GM23248 (cell line): ENCODE measurements at regions of chr2 and their contacts with region 1.

Region 1: GRCh38 chr2:168136392-168136977 is 110.9 kb downstream of the STK39 start:
- DNase-seq: peak; percentile 54
- H3K4me3 ChIP-seq: no peak overlapping the region
- H3K27ac ChIP-seq: no peak overlapping the region
- H3K4me1 ChIP-seq: no peaks in the 10 kb centered on the region
- H3K27me3 ChIP-seq: no peaks in the 10 kb centered on the region

Region 2: GRCh38 chr2:168336864-168337263 is 200.4 kb after region 1 on chr2:
- in situ Hi-C with region 1: loop called (anchors 10 kb)
- DNase-seq: no peak
- H3K4me3 ChIP-seq: no peak overlapping the region
- H3K27ac ChIP-seq: no peak overlapping the region
- H3K4me1 ChIP-seq: no peaks in the 10 kb centered on the region
- H3K27me3 ChIP-seq: no peaks in the 10 kb centered on the region

Region 3: DNA sequence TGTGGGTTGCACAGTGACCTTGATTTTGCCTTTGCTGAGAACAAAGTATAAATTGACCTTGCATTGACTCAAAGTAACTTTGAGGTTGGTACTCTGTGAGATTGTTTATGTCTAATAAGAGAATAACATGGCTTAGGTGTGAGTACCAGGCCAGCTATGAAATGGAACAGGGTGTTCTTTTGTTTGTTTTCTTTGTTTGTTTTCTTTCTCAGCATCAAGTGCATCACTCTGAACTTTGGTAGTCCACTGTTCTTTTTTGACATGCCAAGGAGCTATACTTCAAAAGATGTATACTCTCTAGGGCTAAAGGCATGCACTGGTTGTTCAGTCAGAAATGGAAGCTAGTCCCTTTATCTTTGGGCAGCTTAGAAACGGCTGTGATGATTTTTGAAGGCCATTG is 889.6 kb after region 1 on chr2:
- in situ Hi-C with region 1: no loop called
- DNase-seq: no peak
- H3K4me3 ChIP-seq: no peak overlapping the region
- H3K27ac ChIP-seq: no peak overlapping the region
- H3K4me1 ChIP-seq: no peaks in the 10 kb centered on the region
- H3K27me3 ChIP-seq: no peaks in the 10 kb centered on the region; the same call in 1 of the 2 replicates